Right ventricle myocardium inferior (tissue), 1 donor: ENCODE measurements at regions of chr3 and their contacts with region 1.

Region 1: DNA sequence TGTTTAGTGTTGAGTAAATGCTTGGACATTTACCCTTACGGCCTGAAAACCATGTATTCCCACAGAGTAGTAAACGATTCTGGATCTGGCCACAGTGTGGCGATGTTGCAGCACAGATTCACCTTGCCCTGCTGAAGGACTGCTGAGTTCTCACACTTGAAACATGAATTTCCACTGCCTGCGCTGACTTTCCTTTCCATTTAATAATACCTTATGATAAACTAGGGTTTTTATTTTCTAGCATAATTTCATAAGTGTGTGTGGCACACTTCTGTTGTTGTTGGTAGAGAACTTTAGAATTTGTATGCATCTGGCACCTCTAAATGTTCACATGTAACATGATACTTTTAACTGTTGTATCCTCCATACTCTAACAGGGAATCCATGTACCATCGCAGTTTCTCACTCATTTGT is 53.9 kb downstream of the C3orf38 start:
- DNase-seq: peak; percentile 50
- ATAC-seq: peak; percentile 75

Region 2: GRCh38 chr3:87848003-87848402 is 355.6 kb before region 1 on chr3:
- intact Hi-C with region 1: no loop called
- DNase-seq: no peak
- ATAC-seq: no peak

Region 3: DNA sequence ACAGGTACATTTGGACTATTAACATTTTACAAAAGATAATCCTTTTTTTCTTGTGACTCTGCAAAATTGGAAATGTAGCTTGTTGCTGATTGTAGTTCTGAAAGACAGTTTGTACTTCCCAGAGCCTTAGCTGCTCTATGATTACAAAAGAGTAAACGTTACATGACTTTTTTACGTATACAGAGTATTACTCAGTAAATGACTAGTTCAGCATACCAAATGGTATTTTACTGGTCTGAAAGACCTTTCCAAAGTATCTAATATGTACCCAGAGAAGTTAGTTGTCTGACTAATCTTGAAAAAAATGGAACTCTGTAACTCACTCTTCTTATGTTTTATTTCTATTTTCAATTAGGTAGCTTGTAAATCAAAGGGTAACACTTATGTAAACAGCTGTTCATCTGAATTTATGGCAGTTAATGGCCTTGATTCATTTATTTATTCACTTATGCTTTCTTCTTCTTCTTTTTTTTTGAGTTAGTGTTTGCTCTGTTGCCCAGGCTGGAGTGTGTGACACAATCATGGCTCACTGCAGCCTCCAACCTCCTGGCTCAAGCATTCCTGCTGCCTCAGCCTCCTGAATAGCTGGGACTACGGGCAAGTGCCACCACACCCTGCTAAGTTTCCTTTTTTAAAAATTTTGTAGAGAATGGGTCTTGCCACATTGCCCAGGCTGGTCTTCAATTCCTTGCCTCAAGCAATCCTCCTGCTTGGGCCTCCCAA is 97.8 kb after region 1 on chr3:
- intact Hi-C with region 1: no loop called
- DNase-seq: no peak
- ATAC-seq: no peak

Region 4: DNA sequence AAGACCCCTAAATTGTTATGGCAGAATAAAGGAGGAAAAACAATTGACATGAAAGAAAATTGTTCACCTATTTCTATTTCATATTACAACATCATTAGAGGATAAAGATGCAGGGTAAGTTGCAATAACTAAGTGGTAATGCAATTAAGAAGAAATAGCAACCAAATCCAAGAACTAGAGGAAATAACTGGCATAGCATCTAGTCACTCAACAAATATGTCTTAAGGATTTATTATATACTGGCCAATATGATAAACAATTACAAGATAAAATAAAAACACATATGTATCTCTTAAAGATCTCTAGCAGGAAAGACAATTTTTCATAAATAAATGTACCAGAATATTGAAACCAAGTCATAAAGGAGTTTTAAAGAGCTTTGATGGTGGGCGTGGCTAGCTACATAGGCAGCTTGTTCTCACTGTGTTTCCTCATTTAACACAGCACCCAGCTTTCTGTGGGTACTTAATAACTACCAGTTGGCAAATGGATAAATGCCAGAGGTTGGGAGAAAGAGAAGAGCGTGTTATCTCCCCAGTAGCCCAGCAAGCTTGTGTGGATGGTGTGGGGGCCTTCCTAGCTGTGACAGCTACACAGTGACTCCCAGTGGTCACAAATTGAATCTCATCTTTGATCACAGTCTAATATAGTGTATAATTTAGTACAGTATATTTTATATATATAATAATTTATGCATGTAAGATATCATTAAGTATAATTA is 1887.7 kb after region 1 on chr3:
- intact Hi-C with region 1: loop called (anchors 10 kb)
- DNase-seq: no peak
- ATAC-seq: peak; percentile 77

Region 5: GRCh38 chr3:90184861-90185260 is 1981.2 kb after region 1 on chr3:
- intact Hi-C with region 1: loop called (anchors 5 kb)
- DNase-seq: no peak
- ATAC-seq: no peak